Natural killer cell (primary cell): ENCODE measurements at regions of chr15 and their contacts with region 1.

Region 1: DNA sequence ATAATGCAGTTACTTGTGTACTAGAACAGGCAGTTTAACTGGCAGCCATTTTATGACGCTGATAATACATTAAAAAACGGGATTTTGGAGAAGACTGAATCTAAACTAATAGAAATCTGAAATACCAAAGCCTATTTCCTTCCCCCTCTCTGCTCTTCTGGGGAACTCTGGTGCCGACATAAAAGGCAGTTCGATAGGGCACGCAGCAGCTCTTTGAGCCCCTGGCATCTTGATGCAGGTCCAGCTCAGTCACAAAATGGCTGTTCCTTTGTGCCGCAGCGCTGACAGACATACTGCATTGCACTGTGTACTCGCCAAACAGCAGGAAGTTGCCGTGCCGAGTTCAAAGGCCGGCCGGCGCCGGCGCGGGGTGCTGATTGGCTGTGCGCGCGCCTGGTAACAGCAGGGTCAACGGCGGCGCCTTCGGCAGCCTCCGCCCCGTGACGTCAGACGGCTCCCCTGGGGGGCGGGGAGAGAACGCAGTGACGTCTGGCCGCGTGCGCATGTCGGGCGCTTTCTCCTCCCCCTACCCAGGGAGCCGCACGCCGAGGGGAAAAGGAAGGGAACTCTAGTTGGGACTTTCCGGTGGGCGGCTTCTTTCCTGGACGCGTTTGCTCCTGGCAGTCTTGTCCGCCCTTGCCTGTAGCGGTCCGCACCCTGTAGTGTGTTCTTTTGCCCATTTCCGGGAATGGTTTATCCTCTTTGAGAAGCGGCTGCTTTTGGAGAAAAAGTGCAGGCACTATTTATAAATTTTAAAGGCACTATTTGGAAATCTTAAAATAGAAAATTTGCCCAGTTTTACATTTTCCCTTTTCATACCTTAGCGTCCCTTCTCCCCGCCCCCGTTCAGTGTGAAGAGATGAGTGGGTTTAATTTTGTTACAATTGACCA is 4.1 kb downstream of the CHD2 start:
- DNase-seq: peak; percentile 99
- ATAC-seq: peak; percentile 73 to 95 (median 86)
- H3K4me3 ChIP-seq: peak overlapping the region; percentile 65
- H3K4me3 Mint-ChIP-seq: peak overlapping the region; percentile 93
- H3K27ac ChIP-seq: peak overlapping the region; percentile 99
- H3K27ac Mint-ChIP-seq: peak overlapping the region; percentile 99 to 100
- H3K4me1 ChIP-seq: peaks cover 27% of the 10 kb centered on the region
- H3K4me1 Mint-ChIP-seq: peaks cover 76% of the 10 kb centered on the region in 2 donors
- H3K27me3 ChIP-seq: no peaks in the 10 kb centered on the region
- H3K27me3 Mint-ChIP-seq: no peaks in the 10 kb centered on the region
- CTCF ChIP-seq: no peak

Region 2: GRCh38 chr15:92808978-92809879 is 95.0 kb before region 1 on chr15:
- intact Hi-C with region 1: loop called (anchors 1 kb)
- DNase-seq: peak; percentile 96 to 99
- ATAC-seq: peak; percentile 83 to 95 (median 88)
- H3K4me3 ChIP-seq: peak overlapping the region; percentile 60
- H3K4me3 Mint-ChIP-seq: peak overlapping the region; percentile 91
- H3K27ac ChIP-seq: peak overlapping the region; percentile 96
- H3K27ac Mint-ChIP-seq: peak overlapping the region; percentile 95 to 96
- H3K4me1 ChIP-seq: peaks cover 24% of the 10 kb centered on the region
- H3K4me1 Mint-ChIP-seq: peaks cover 26 to 27% of the 10 kb centered on the region in 2 donors
- H3K27me3 ChIP-seq: no peaks in the 10 kb centered on the region
- H3K27me3 Mint-ChIP-seq: no peaks in the 10 kb centered on the region
- CTCF ChIP-seq: peak; percentile 97